Dorsolateral prefrontal cortex (tissue), 120 donors: ENCODE measurements at regions of chr21 and their contacts with region 1.

Region 1: GRCh38 chr21:33069976-33070811 is at the start of gene OLIG1:
- DNase-seq: peak; percentile 64 to 91 (median 76)
- H3K4me3 ChIP-seq: peak within 1 kb of the TSS; percentile 39 to 84 (median 65)
- H3K27ac ChIP-seq: peak within 1 kb of the TSS in 57 of 59 donors; percentile 22 to 94 (median 85)
- H3K27me3 ChIP-seq: peaks cover 0 to 76% (median 51%) of the 10 kb centered on the region in 45 donors
- CTCF ChIP-seq: peak in 6 of 56 donors; percentile 6 to 40 (median 10)
- total RNA-seq, gene OLIG1: 30.7 to 365 (median 119) TPM

Region 2: DNA sequence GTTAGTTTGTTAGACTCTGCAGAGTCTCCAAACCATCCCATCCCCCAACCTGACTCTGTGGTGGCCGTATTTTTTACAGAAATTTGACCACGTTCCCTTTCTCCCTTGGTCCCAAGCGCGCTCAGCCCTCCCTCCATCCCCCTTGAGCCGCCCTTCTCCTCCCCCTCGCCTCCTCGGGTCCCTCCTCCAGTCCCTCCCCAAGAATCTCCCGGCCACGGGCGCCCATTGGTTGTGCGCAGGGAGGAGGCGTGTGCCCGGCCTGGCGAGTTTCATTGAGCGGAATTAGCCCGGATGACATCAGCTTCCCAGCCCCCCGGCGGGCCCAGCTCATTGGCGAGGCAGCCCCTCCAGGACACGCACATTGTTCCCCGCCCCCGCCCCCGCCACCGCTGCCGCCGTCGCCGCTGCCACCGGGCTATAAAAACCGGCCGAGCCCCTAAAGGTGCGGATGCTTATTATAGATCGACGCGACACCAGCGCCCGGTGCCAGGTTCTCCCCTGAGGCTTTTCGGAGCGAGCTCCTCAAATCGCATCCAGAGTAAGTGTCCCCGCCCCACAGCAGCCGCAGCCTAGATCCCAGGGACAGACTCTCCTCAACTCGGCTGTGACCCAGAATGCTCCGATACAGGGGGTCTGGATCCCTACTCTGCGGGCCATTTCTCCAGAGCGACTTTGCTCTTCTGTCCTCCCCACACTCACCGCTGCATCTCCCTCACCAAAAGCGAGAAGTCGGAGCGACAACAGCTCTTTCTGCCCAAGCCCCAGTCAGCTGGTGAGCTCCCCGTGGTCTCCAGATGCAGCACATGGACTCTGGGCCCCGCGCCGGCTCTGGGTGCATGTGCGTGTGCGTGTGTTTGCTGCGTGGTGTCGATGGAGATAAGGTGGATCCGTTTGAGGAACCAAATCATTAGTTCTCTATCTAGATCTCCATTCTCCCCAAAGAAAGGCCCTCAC is 44.4 kb before region 1 on chr21 and contains the start of gene OLIG2:
- intact Hi-C with region 1: loop called (anchors 1 kb)
- DNase-seq: peak; percentile 46 to 96 (median 95)
- H3K4me3 ChIP-seq: peak within 1 kb of the TSS; percentile 35 to 82 (median 61)
- H3K27ac ChIP-seq: peak within 1 kb of the TSS; percentile 40 to 93 (median 86)
- H3K27me3 ChIP-seq: peaks cover 0 to 100% (median 92%) of the 10 kb centered on the region in 45 donors
- CTCF ChIP-seq: peak in 1 of 56 donors; percentile 17
- total RNA-seq, gene OLIG2: 13.9 to 165 (median 45.4) TPM

Region 3: DNA sequence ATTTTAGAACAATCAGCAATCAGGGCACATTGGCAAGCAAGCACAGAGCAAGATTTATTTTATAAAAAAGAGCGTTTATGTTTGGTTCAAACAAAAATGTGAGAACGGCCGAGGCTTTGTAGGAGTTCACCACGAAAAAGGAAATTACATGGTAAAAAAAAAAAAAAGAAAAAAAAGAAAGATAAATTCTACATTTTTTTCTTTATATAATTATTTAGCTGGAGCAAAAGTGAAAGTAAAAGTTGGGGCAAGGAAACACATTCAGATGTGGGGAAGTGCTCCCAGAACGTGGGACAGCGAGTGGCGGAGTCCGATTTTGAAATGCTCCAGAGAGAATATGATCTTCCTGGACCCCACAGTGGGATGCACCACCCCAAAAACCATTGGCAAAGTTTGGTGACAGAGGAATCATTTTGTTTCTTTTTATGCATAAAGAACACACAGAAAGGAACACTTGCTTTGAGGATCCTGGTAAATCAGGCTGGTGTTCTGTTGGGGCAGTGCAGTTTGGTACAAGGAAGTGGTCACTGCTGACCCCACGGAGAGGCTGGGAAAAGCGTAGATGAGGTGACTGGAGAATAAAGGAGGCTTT is 861.7 kb after region 1 on chr21:
- intact Hi-C with region 1: no loop called
- DNase-seq: no peak
- H3K4me3 ChIP-seq: peak overlapping the region in 54 of 59 donors; percentile 4 to 56 (median 33)
- H3K27ac ChIP-seq: peak overlapping the region in 8 of 59 donors; percentile 6 to 68 (median 30)
- H3K27me3 ChIP-seq: no peaks in the 10 kb centered on the region
- CTCF ChIP-seq: no peak